Caco-2 (cell line): ENCODE measurements at regions of chr2 and their contacts with region 1.

Region 1: DNA sequence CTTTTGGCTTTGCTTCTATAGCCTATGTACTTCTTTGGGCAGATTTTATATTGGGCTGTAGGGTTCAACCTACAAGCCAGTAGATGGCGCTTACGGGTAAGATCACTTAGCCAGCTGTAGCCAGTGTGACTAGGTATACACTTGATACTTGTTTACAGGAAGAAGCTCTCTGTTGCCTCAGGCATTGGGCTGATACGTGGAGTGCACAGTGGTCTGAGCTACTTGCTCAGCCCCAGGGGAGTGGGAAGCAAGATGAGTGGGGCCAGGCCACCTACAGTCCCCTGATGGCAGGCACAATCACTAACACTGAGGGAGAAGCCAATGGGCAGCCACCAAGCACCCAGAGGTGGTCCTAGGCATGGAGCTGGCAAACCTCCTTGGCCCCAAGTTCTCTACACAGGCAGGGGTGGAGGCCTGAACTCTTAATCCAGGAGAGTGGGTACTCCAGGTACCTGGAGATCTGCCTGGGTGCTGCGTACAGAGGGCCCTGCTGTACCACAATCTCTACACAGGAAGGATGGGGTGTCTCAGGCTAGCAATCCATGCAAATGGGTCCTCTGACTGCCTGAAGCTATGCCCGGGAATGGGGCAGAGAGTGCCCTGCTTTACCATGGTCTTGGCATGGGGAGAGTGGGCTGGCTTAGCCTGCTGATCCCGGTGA is 122.2 kb downstream of the NCOA1 start:
- DNase-seq: peak in 1 of 2 experiments; percentile 24
- H3K4me3 ChIP-seq: no peak overlapping the region
- H3K4me3 Mint-ChIP-seq: no peak overlapping the region
- H3K27ac Mint-ChIP-seq: no peak overlapping the region
- H3K4me1 ChIP-seq: no peaks in the 10 kb centered on the region
- H3K4me1 Mint-ChIP-seq: no peaks in the 10 kb centered on the region
- H3K27me3 ChIP-seq: no peaks in the 10 kb centered on the region
- H3K27me3 Mint-ChIP-seq: no peaks in the 10 kb centered on the region
- CTCF ChIP-seq: peak in 1 of 2 experiments; percentile 18

Region 2: DNA sequence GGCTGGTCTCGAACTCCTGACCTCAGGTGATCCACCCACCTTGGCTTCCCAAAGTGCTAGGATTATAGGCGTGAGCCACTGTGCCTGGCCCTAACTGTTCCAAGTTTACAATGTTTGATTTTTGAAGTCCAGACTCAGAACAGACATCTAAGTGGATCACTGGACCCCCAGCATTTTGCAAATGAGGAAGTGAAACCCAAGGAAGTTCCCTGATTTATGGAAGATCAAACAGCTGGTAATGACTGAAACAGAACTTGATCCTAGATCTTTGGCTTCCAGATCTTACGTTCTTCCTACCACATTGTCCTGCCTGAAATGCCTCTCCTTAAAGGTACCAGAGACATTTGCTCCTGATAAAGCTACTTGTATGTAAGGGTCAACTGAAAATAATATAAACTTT is 180.5 kb before region 1 on chr2:
- CTCF ChIA-PET with region 1: interaction called, 14 read pairs
- POLR2A ChIA-PET with region 1: no interaction called
- intact Hi-C with region 1: no loop called
- DNase-seq: no peak
- H3K4me3 ChIP-seq: no peak overlapping the region
- H3K4me3 Mint-ChIP-seq: no peak overlapping the region
- H3K27ac Mint-ChIP-seq: no peak overlapping the region
- H3K4me1 ChIP-seq: no peaks in the 10 kb centered on the region
- H3K4me1 Mint-ChIP-seq: no peaks in the 10 kb centered on the region
- H3K27me3 ChIP-seq: no peaks in the 10 kb centered on the region
- H3K27me3 Mint-ChIP-seq: no peaks in the 10 kb centered on the region
- CTCF ChIP-seq: no peak

Region 3: GRCh38 chr2:25279091-25279651 is 665.9 kb after region 1 on chr2:
- CTCF ChIA-PET with region 1: no interaction called
- POLR2A ChIA-PET with region 1: no interaction called
- intact Hi-C with region 1: no loop called
- DNase-seq: no peak
- H3K4me3 ChIP-seq: no peak overlapping the region
- H3K4me3 Mint-ChIP-seq: no peak overlapping the region
- H3K27ac Mint-ChIP-seq: no peak overlapping the region
- H3K4me1 ChIP-seq: no peaks in the 10 kb centered on the region
- H3K4me1 Mint-ChIP-seq: peaks cover 7% of the 10 kb centered on the region
- H3K27me3 ChIP-seq: no peaks in the 10 kb centered on the region
- H3K27me3 Mint-ChIP-seq: no peaks in the 10 kb centered on the region
- CTCF ChIP-seq: no peak